PC-9 (cell line): ENCODE measurements at regions of chr13 and their contacts with region 1.

Region 1: DNA sequence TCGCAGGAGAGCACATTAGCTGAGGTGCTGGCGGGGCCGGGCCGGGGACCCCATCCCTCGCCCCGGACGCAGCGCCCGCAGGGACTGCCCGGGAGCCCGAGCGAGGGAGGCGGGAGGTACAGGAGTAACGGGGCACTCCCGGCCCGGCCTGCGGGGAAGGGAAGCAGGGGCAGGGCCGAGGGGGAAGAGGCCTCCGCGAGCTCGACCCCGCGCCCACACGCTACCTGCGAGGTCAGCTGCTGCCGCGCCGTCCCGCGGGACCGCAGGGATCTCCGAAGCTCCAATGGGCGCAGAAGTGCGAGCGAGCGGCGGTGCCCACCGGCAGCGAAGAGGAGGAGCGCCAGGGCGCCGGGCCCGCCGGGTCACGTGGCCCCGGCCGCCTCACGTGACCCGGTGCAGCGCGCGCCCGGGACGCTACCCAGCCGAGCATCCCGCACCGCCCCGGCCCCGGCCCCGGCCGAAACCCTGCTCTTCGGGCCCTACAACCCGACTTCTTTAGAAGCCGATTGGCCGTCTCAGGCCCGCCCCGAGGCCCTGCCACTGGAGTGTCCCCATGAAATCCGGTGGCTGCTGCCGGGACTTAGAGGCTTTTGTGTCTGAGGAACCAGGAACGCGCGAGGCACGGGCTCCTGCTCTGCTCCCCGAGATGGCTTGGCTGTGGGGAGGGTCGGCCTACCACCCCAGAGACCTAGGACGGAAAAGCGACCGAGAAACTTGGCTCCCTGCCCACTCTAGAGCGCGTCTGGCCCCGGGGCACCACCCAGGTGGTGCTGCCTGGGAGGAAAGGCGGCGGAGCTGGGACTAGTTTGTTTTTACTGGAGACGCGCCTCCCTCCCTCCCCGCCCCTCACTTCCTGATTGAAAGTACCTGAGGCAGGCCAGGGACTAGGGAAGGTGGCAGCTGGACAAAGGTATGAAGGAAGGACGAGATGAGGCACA is at the start of gene RCBTB1:
- DNase-seq: peak; percentile 51 to 64
- H3K4me3 ChIP-seq: peak within 1 kb of the TSS; percentile 97
- H3K27ac ChIP-seq: peak within 1 kb of the TSS; percentile 48
- H3K4me1 ChIP-seq: peaks cover 33% of the 10 kb centered on the region
- H3K27me3 ChIP-seq: no peaks in the 10 kb centered on the region
- CTCF ChIP-seq: no peak
- total RNA-seq, gene RCBTB1: 14.6 and 16.1 TPM in 2 replicates

Region 2: DNA sequence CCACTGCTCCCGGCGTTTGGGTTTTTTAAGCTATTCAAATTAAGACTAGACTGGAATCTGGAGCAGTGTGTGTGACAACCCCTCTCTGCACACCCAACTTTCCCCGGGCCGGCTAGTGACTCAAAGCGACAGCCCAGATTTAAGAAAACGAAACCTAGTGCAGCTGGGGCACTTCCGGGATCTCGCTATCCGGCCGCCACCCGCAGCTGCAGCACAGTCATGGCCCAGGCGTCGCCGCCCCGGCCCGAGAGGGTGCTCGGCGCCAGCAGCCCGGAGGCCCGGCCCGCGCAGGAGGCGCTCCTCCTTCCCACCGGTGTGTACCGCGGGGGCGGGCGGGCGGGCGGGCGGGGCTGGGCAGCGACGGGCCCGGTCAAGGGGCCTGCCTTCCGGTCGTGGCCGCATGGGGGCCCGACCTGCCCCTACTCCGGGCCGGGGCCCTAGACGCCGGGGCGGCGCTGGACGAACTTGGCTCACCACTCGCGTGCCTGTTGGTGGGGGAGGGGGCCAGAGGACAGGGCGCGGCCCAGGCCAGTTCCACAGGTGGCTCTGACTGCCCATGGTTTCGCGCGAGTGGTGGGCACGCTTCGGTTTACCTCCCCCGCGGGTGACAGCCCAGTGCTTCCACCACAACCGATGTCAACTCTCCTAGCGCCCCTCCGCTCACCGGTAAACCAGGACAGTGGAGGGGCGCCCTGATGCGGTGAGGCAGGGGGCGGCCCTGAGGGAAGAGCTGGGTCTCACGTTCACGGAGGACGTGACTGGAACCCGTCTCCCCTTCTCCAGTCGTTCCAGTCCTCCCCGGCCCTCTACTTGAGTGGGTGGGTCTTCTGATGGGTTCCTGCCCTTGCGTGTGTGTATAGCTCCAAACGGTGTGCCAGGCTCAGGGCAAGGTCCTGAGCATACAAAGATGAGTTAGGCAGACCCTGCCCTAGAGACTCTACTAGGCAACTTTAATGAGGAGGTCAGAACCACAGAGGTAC is 89.4 kb before region 1 on chr13 and contains the start of gene PHF11:
- CTCF ChIA-PET with region 1: no interaction called
- POLR2A ChIA-PET with region 1: no interaction called
- intact Hi-C with region 1: loop called (anchors 1 kb)
- DNase-seq: peak; percentile 67 to 68
- H3K4me3 ChIP-seq: peak within 1 kb of the TSS; percentile 64
- H3K27ac ChIP-seq: peak within 1 kb of the TSS; percentile 72
- H3K4me1 ChIP-seq: peaks cover 15% of the 10 kb centered on the region
- H3K27me3 ChIP-seq: no peaks in the 10 kb centered on the region
- CTCF ChIP-seq: no peak
- total RNA-seq, gene PHF11: 15.2 and 25.2 TPM in 2 replicates

Region 3: DNA sequence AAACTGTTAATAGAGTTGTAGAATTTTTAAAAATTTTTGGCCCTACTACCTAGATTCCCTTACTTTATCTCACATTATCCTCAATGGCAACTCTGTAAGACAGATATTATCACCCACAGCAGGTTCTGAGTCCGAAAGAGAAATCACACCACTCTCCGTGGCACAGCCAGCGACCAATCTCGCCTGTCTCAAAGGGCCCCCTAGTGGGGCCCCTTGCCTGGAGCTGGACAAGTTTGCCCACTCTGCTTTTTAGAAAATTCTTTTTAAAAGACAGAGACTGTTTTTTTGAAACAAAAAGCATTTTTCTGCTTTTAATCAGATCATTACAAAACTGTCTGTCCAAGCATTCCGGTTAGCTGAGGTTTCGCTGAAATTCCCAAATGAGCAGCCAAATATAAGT is 68.0 kb before region 1 on chr13:
- CTCF ChIA-PET with region 1: no interaction called
- POLR2A ChIA-PET with region 1: no interaction called
- intact Hi-C with region 1: no loop called
- DNase-seq: no peak
- H3K4me3 ChIP-seq: no peak overlapping the region
- H3K27ac ChIP-seq: no peak overlapping the region
- H3K4me1 ChIP-seq: no peaks in the 10 kb centered on the region
- H3K27me3 ChIP-seq: no peaks in the 10 kb centered on the region
- CTCF ChIP-seq: no peak

Region 4: GRCh38 chr13:49569956-49570689 is 15.4 kb before region 1 on chr13:
- CTCF ChIA-PET with region 1: no interaction called
- POLR2A ChIA-PET with region 1: interaction called, 4 read pairs
- intact Hi-C with region 1: loop called (anchors 2 kb)
- DNase-seq: peak in 1 of 2 experiments; percentile 89
- H3K4me3 ChIP-seq: no peak overlapping the region
- H3K27ac ChIP-seq: peak overlapping the region; percentile 64
- H3K4me1 ChIP-seq: peaks cover 29% of the 10 kb centered on the region
- H3K27me3 ChIP-seq: no peaks in the 10 kb centered on the region
- CTCF ChIP-seq: no peak

Region 5: DNA sequence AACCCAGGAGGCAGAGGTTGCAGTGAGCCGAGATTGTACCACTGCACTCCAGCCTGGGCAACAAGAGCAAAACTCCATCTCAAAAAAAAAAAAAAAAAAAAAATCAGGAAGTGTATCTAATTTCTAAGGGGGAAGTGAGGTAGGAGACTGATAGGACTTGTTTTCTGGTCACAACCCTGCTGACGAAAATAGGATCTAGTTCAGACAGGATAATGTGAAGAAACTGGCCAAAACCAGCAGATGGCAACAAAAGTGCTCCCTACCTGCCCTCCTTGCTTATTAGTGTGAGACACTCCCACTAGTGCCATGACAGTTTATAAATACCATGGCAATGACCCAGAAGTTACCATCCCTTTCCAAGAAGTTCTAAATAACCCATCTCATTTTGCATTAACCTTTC is 243.0 kb after region 1 on chr13:
- CTCF ChIA-PET with region 1: no interaction called
- POLR2A ChIA-PET with region 1: no interaction called
- intact Hi-C with region 1: no loop called
- DNase-seq: peak in 1 of 2 experiments; percentile 49
- H3K4me3 ChIP-seq: no peak overlapping the region
- H3K27ac ChIP-seq: no peak overlapping the region
- H3K4me1 ChIP-seq: no peaks in the 10 kb centered on the region
- H3K27me3 ChIP-seq: no peaks in the 10 kb centered on the region
- CTCF ChIP-seq: no peak